Naive thymus-derived CD4-positive, alpha-beta T cell (primary cell): ENCODE measurements at regions of chr1 and their contacts with region 1.

Region 1: DNA sequence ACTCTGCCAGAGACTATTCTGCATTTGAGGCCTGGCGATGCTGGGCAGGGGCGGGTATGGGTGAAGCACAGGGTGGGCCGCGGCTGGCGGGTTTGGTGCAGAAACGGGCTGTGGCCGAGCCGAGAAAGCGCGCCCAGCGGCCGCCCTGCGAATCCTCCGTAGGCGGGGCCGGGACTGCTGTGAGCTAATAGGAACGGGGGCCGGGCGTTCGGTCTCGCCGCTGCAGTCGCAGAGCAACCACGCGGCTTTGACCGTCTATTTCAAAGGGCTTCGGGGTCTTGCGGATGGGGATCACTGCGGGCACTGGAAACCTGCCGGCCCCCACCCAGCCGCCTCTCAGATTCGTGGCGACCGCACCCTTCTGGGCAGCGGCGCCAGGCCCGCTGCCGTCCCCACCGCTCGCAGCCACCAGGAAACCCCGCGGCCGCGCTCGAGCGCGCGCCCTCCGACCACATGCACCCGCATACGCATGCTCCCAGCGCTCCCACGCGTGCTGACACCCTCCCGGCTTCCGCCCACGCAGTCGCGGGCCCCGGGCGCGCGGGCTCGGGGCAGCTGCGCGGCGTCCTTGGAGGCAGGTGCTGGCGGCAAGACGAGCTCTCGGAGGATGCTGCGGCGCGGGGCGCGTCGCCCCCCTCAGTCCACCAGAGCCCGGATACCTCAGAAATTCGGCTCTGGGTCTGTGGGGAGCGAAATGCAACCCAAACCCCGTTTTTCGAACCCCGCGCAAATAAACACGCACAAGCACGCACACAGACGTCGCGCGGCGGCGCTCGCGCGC is 32.6 kb downstream of the DNTTIP2 start:
- DNase-seq: peak; percentile 78 to 91 (median 89)
- ATAC-seq: peak; percentile 71
- H3K4me3 ChIP-seq: peak overlapping the region; percentile 90
- H3K4me3 Mint-ChIP-seq: peak overlapping the region; percentile 86 to 97 (median 91)
- H3K27ac ChIP-seq: peak overlapping the region; percentile 88
- H3K27ac Mint-ChIP-seq: peak overlapping the region; percentile 86 to 100 (median 96)
- H3K4me1 ChIP-seq: peaks cover 4 to 16% of the 10 kb centered on the region in 2 donors
- H3K4me1 Mint-ChIP-seq: peaks cover 15 to 36% (median 24%) of the 10 kb centered on the region in 7 donors
- H3K27me3 ChIP-seq: no peaks in the 10 kb centered on the region
- H3K27me3 Mint-ChIP-seq: peaks cover 0 to 13% (median 0%) of the 10 kb centered on the region in 5 donors

Region 2: GRCh38 chr1:92831762-92832536 is 1014.5 kb before region 1 on chr1 and contains the start of gene RPL5:
- CTCF ChIA-PET with region 1: no interaction called
- POLR2A ChIA-PET with region 1: interaction called, 4 read pairs
- intact Hi-C with region 1: loop called (anchors 1 to 5 kb)
- DNase-seq: peak; percentile 94 to 99 (median 98)
- ATAC-seq: peak; percentile 95
- H3K4me3 ChIP-seq: peak within 1 kb of the TSS; percentile 94
- H3K4me3 Mint-ChIP-seq: peak within 1 kb of the TSS; percentile 94 to 100 (median 98)
- H3K27ac ChIP-seq: peak within 1 kb of the TSS; percentile 94
- H3K27ac Mint-ChIP-seq: peak within 1 kb of the TSS; percentile 98 to 100 (median 99)
- H3K4me1 ChIP-seq: peaks cover 16 to 30% of the 10 kb centered on the region in 2 donors
- H3K4me1 Mint-ChIP-seq: peaks cover 29 to 54% (median 44%) of the 10 kb centered on the region in 7 donors
- H3K27me3 ChIP-seq: no peaks in the 10 kb centered on the region
- H3K27me3 Mint-ChIP-seq: peaks cover 0 to 5% (median 0%) of the 10 kb centered on the region in 5 donors
- total RNA-seq, gene RPL5: 764 to 1,693 (median 1,596) TPM

Region 3: DNA sequence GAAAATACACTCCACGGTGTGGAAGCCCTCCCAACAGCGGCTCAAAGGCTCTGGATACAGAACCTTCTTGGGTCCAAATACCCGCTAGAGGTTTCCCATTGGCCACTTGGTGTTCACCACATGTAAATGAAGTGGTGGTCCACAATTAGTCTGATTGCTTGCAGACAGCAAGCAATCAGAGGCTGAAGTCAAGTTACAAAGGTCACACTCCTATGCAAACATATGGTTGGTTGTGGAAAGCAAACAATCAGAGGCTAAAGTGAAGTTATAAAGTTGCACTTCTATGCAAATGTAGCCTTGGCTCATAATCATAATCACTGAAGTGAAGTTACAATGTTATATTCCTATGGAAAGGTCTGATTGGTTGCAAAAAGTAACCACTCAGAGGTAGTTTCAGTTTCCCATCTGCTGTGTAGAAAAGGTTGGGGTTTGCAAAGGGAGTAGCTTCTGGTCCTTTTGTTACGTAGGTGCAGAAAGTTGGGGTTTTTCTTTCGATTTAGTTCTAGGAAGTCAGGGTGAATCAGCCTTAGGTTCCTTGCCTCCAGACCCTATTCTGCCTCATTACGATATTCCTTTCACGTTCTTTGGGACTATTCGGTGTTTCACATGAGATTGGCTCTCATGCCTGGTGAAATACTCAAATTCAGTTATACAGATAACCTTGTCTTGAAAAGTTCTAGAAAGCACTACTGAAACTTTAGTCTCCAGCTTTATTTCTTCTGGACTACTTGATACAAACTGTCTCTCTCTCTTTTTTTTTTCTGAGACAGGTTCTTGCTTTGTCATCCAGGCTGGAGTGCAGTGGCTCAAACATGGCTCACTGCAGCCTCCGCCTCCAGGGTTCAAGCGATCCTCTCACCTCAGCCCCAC is 804.0 kb before region 1 on chr1:
- CTCF ChIA-PET with region 1: no interaction called
- POLR2A ChIA-PET with region 1: no interaction called
- intact Hi-C with region 1: loop called (anchors 1 to 10 kb)
- DNase-seq: peak in 8 of 9 donors; percentile 27 to 87 (median 79)
- ATAC-seq: peak; percentile 99
- H3K4me3 ChIP-seq: peak overlapping the region; percentile 38
- H3K4me3 Mint-ChIP-seq: peak overlapping the region; percentile 42 to 89 (median 82)
- H3K27ac ChIP-seq: peak overlapping the region; percentile 78
- H3K27ac Mint-ChIP-seq: peak overlapping the region; percentile 88 to 98 (median 94)
- H3K4me1 ChIP-seq: peaks cover 9 to 10% of the 10 kb centered on the region in 2 donors
- H3K4me1 Mint-ChIP-seq: peaks cover 7 to 38% (median 14%) of the 10 kb centered on the region in 7 donors
- H3K27me3 ChIP-seq: no peaks in the 10 kb centered on the region
- H3K27me3 Mint-ChIP-seq: no peaks in the 10 kb centered on the region

Region 4: GRCh38 chr1:93304716-93305138 is 541.7 kb before region 1 on chr1:
- CTCF ChIA-PET with region 1: interaction called, 8 read pairs
- POLR2A ChIA-PET with region 1: interaction called, 6 read pairs
- intact Hi-C with region 1: loop called (anchors 1 to 5 kb)
- DNase-seq: peak in 8 of 9 donors; percentile 24 to 72 (median 54)
- ATAC-seq: peak; percentile 78
- H3K4me3 ChIP-seq: no peak overlapping the region
- H3K4me3 Mint-ChIP-seq: no peak overlapping the region
- H3K27ac ChIP-seq: no peak overlapping the region
- H3K27ac Mint-ChIP-seq: no peak overlapping the region
- H3K4me1 ChIP-seq: no peaks in the 10 kb centered on the region
- H3K4me1 Mint-ChIP-seq: peaks cover 0 to 4% (median 0%) of the 10 kb centered on the region in 7 donors
- H3K27me3 ChIP-seq: no peaks in the 10 kb centered on the region
- H3K27me3 Mint-ChIP-seq: no peaks in the 10 kb centered on the region

Region 5: DNA sequence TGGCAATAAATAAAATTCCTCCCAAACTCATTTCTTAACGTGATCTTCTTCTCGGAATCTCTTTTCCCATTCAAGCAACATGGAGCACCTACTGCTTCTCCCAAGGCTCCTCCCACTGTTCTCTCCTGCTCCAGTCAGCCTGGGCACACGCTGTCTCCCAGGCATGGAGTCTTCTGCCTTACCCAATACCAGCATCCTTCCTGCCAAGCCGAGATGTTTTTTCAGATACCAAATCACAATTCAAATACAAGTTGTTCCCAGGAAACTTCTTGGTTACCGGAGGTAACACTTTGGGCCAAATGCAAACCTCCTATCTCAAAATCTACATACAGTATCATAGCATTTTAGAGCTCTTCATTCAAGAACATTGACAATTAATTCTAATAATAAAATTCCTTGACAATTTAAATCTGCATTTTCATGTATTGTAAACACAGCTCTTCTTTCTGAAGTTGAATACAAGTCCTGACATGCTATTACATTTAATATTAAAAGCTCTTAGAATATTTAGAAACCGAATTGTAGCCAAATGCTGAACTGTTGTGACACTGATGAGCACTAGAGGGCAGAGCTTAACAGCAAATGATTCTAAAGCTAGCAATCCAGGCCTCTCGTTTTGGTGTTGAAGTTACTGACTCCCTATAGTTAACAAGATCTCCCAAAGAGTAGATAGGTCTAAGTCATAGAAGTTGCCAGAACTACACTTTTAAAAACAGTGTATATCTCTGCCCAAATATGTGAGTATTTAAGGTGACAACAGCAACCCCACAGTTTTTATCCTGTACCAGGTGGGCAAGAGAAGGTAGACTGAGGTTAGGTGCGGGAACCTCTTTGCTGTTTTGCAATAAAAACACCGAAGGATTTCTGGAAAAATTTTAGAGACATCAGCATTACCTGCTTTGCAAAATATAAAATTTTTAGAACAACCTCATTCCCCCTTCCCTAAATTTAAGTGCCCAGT is 217.0 kb before region 1 on chr1:
- CTCF ChIA-PET with region 1: interaction called, 59 read pairs
- POLR2A ChIA-PET with region 1: interaction called, 13 read pairs
- intact Hi-C with region 1: loop called (anchors 1 to 2 kb)
- DNase-seq: peak in 8 of 9 donors; percentile 22 to 69 (median 56)
- ATAC-seq: peak; percentile 89
- H3K4me3 ChIP-seq: no peak overlapping the region
- H3K4me3 Mint-ChIP-seq: no peak overlapping the region
- H3K27ac ChIP-seq: no peak overlapping the region
- H3K27ac Mint-ChIP-seq: no peak overlapping the region
- H3K4me1 ChIP-seq: no peaks in the 10 kb centered on the region
- H3K4me1 Mint-ChIP-seq: no peaks in the 10 kb centered on the region
- H3K27me3 ChIP-seq: no peaks in the 10 kb centered on the region
- H3K27me3 Mint-ChIP-seq: peaks cover 0 to 10% (median 0%) of the 10 kb centered on the region in 5 donors

Region 6: DNA sequence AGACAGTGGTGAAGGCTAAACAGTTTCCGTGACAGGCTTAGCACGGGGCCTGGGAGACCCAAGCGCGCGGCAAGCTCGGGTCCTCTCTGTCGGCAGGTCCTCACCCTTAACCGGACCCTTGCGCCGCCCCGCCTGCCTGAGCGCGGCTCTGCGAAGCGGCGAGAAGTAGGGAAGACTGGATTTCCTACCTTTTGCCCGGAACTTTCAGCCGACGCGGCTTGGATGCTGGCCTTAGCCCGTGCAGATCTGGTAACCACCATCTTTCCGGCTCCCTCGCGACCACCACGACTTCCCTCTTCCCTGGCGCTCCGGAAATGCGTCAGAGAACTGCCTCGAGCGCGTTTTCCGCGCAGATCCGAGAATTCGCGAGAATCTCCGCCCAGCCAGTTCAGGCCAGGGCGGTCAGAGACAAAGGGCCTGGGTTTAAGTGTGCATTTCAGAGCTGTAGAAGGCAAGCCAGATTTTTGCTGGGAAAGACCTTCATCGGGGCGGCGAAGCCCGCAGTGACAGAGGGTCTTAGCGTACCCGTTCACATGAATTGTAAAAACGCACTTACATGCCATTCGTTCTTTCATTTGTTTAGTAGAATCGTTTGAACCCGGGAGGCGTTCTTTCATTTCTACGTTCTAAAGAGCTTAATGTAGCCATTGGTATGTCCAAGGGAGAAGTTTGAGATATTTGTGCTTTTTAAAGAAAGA is 32.6 kb after region 1 on chr1 and contains the start of gene DNTTIP2:
- CTCF ChIA-PET with region 1: interaction called, 5 read pairs
- POLR2A ChIA-PET with region 1: interaction called, 51 read pairs
- intact Hi-C with region 1: loop called (anchors 1 kb)
- DNase-seq: peak; percentile 73 to 89 (median 86)
- ATAC-seq: peak; percentile 90
- H3K4me3 ChIP-seq: peak within 1 kb of the TSS; percentile 83
- H3K4me3 Mint-ChIP-seq: peak within 1 kb of the TSS; percentile 92 to 99 (median 97)
- H3K27ac ChIP-seq: peak within 1 kb of the TSS; percentile 94
- H3K27ac Mint-ChIP-seq: peak within 1 kb of the TSS; percentile 96 to 99 (median 98)
- H3K4me1 ChIP-seq: peaks cover 21 to 25% of the 10 kb centered on the region in 2 donors
- H3K4me1 Mint-ChIP-seq: peaks cover 34 to 62% (median 54%) of the 10 kb centered on the region in 7 donors
- H3K27me3 ChIP-seq: no peaks in the 10 kb centered on the region
- H3K27me3 Mint-ChIP-seq: no peaks in the 10 kb centered on the region
- total RNA-seq, gene DNTTIP2: 51.8 to 84.2 (median 77.5) TPM

Region 7: DNA sequence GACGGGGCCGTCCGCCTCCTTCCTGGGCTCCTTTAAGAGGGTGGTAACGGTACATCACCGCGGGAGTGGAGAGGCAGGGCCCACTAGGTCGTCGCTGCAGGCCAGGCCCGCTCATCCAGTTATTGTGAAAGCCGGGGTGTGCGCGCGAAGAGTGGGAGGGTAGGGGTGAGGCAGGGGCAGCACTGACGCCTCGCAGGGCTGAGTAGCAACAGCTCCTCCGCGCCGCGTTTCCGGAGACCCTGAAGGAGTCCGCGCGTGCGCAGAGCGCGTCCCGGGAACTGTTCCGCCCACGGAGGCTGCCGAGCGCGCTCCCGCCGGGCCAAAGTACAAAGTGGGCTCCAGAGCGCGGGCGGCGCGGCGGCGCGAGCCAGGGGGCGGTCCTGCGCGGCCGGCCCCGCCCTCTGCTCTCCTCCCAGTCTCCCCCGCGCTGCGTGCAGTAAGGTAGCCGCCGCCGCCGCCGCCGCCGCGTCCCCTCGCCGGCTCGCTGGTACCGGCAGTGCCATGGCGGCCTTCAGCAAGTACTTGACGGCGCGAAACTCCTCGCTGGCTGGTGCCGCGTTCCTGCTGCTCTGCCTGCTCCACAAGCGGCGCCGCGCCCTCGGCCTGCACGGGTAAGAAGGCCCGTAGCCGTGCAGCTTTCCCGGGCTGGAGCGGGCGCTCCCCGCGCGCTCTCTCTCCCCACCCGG is 571.7 kb after region 1 on chr1 and contains the start of gene ABCD3:
- CTCF ChIA-PET with region 1: no interaction called
- POLR2A ChIA-PET with region 1: interaction called, 4 read pairs
- intact Hi-C with region 1: loop called (anchors 1 kb)
- DNase-seq: peak; percentile 97 to 99 (median 99)
- ATAC-seq: peak; percentile 97
- H3K4me3 ChIP-seq: peak within 1 kb of the TSS; percentile 79
- H3K4me3 Mint-ChIP-seq: no peak within 1 kb of the TSS
- H3K27ac ChIP-seq: peak within 1 kb of the TSS; percentile 76
- H3K27ac Mint-ChIP-seq: peak within 1 kb of the TSS in 7 of 9 donors; percentile 68 to 91 (median 83)
- H3K4me1 ChIP-seq: peaks cover 10 to 15% of the 10 kb centered on the region in 2 donors
- H3K4me1 Mint-ChIP-seq: peaks cover 25 to 42% (median 40%) of the 10 kb centered on the region in 7 donors
- H3K27me3 ChIP-seq: no peaks in the 10 kb centered on the region
- H3K27me3 Mint-ChIP-seq: peaks cover 0 to 16% (median 0%) of the 10 kb centered on the region in 5 donors
- total RNA-seq, gene ABCD3: 18.0 to 31.2 (median 25.0) TPM